AG04449 (cell line): ENCODE measurements at regions of chr14 and their contacts with region 1.

Region 1: DNA sequence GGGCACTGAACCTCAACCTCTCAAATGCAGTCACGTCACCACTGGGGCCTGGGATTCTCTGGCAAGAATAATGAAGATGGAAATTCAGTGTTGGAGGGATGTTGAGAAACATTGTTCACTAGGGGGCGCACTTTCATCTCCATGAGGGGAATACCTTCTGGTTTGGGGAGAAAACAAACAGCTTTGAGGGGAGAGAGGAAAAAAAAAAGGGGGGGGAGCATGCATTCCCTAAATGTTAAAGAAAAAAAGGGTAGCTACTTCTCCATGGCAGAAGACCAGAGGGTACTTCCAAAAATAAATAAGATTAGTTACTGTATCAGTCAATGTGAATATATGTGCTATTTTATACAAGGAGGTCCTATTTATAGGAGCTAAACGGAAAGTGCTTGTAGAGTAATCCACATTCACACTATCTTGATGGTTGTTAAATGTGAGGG is 5.8 kb upstream of the TBPL2 start:
- DNase-seq: no peak
- H3K4me3 ChIP-seq: no peak overlapping the region
- CTCF ChIP-seq: peak; percentile 69

Region 2: GRCh38 chr14:55146425-55146824 is 299.8 kb before region 1 on chr14:
- CTCF ChIA-PET with region 1: no interaction called
- POLR2A ChIA-PET with region 1: no interaction called
- DNase-seq: no peak
- H3K4me3 ChIP-seq: no peak overlapping the region
- CTCF ChIP-seq: no peak

Region 3: GRCh38 chr14:55430024-55430690 is 16.1 kb before region 1 on chr14:
- CTCF ChIA-PET with region 1: interaction called, 124 read pairs
- POLR2A ChIA-PET with region 1: no interaction called
- DNase-seq: no peak
- H3K4me3 ChIP-seq: no peak overlapping the region
- CTCF ChIP-seq: peak; percentile 44

Region 4: GRCh38 chr14:55500219-55500701 is 54.0 kb after region 1 on chr14:
- CTCF ChIA-PET with region 1: no interaction called
- POLR2A ChIA-PET with region 1: no interaction called
- DNase-seq: no peak
- H3K4me3 ChIP-seq: no peak overlapping the region
- CTCF ChIP-seq: no peak

Region 5: DNA sequence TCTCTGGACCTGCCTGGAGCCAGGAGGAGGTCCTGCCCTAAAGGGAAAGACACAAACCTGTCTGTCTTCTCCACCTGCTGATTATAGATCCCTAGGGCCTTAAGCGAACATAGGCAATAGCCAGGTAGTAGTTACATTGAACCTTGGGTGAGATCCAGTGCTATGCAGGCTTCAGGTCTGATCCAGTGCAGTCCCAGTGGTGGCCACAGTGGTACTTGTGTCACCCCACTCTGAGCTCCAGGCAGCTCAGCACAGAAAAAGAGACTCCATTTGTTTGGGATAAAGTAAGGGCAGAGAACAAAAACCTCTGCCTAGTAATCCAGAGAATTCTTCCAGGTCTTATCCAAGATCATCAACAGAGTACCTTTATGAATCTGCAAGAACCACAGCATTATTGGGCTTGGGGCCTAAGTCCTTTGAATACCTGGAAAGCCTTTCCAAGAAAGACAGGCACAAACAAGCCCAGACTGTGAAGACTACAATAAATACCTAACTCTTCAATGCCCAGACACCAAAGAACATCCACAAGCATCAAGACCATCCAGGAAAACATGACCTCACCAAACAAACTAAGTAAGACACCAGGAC is 73.3 kb after region 1 on chr14:
- CTCF ChIA-PET with region 1: no interaction called
- POLR2A ChIA-PET with region 1: no interaction called
- DNase-seq: no peak
- H3K4me3 ChIP-seq: no peak overlapping the region
- CTCF ChIP-seq: no peak

Region 6: DNA sequence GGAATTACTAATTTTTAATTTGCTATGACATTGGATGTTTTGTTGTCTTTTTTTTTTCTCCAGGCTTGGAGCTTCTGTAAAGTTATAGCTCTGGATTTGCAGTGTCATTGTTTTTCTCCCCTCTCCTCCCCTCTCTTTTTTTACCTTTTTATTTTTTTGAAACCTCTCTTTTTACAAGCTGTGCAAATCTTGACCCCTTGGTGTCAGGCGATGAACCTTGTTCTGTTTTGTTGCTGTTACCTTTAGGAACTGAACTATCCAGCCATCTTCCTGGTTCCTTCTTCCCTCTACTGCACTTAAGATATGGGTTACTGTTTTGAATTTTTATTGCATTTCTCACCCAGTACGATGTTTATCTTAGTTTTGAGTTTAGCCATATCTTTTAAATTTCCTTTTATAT is 147.5 kb after region 1 on chr14:
- CTCF ChIA-PET with region 1: interaction called, 28 read pairs
- POLR2A ChIA-PET with region 1: no interaction called
- DNase-seq: no peak
- H3K4me3 ChIP-seq: no peak overlapping the region
- CTCF ChIP-seq: no peak

Region 7: GRCh38 chr14:55638665-55639064 is 192.4 kb after region 1 on chr14:
- CTCF ChIA-PET with region 1: interaction called, 17 read pairs
- POLR2A ChIA-PET with region 1: no interaction called
- DNase-seq: no peak
- H3K4me3 ChIP-seq: no peak overlapping the region
- CTCF ChIP-seq: no peak

Region 8: GRCh38 chr14:55681088-55681487 is 234.9 kb after region 1 on chr14:
- CTCF ChIA-PET with region 1: interaction called, 31 read pairs
- POLR2A ChIA-PET with region 1: interaction called, 3 read pairs
- DNase-seq: no peak
- H3K4me3 ChIP-seq: no peak overlapping the region
- CTCF ChIP-seq: no peak

Region 9: GRCh38 chr14:56491299-56492285 is 1045.4 kb after region 1 on chr14:
- CTCF ChIA-PET with region 1: interaction called, 16 read pairs
- POLR2A ChIA-PET with region 1: no interaction called
- DNase-seq: no peak
- H3K4me3 ChIP-seq: no peak overlapping the region
- CTCF ChIP-seq: peak; percentile 72